Common myeloid progenitor, CD34-positive (primary cell): ENCODE measurements at regions of chr1 and their contacts with region 1.

Region 1: DNA sequence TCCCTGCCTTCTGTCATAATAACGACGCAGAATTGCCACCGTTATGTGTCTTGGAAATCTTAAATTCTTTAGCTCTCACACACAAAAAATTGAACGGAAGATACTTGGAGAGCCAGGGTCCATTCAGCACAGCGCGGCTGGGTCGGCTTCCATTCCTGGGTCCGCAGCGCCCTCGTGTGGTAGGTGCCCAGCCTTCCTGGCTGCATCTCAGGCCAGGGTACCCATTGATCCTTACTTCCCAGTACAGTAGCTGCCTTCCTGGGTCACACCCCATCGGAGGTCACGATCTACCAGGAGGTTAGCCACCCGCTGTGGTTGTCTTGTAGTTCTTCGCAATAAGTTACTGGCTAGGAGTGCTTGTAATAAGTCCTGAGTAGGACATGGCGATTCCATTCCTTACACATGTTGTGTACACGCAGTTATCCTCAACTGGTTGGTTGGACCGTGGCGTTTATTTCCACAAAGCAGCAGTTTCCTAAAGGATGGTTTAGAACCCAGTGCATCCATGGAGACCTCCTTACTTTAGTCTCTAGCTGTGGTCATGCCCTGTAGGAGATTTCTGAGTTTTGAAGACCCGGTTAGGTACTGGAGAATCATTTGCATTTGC is 9.9 kb upstream of the MTARC1 start:
- DNase-seq: peak; percentile 67 to 79 (median 74)
- H3K4me3 ChIP-seq: no peak overlapping the region
- H3K27ac ChIP-seq: no peak overlapping the region
- H3K4me1 ChIP-seq: no peaks in the 10 kb centered on the region
- H3K27me3 ChIP-seq: no peaks in the 10 kb centered on the region

Region 2: GRCh38 chr1:220726634-220727033 is 50.2 kb before region 1 on chr1:
- CTCF ChIA-PET with region 1: no interaction called
- POLR2A ChIA-PET with region 1: no interaction called
- DNase-seq: no peak
- H3K4me3 ChIP-seq: no peak overlapping the region
- H3K27ac ChIP-seq: no peak overlapping the region
- H3K4me1 ChIP-seq: peaks cover 0 to 4% (median 0%) of the 10 kb centered on the region in 4 experiments
- H3K27me3 ChIP-seq: no peaks in the 10 kb centered on the region

Region 3: DNA sequence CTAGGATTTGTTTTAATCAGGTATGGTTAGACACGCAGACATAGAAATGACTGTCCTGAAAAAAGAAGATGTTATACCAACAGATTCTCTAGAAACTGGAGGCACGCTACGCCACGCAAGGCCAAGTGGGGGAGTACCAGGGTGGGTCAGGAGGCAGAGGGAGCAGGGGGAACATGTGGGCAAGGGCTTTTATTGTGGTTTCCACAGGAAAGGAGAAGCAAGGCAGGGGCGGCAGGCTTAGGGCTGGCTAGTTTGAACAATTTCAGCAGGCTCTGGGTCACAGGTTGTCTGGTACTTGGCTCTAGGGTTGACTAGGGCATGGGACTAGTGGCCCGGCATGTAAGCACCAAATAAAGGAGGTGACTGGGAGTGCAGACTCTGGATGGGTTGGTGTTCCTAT is 21.5 kb before region 1 on chr1:
- CTCF ChIA-PET with region 1: interaction called, 35 read pairs
- POLR2A ChIA-PET with region 1: no interaction called
- DNase-seq: peak in 2 of 3 donors; percentile 52 to 55
- H3K4me3 ChIP-seq: no peak overlapping the region
- H3K27ac ChIP-seq: no peak overlapping the region
- H3K4me1 ChIP-seq: peaks cover 0 to 25% (median 3%) of the 10 kb centered on the region in 4 experiments
- H3K27me3 ChIP-seq: peaks cover 0 to 5% (median 0%) of the 10 kb centered on the region in 5 experiments

Region 4: DNA sequence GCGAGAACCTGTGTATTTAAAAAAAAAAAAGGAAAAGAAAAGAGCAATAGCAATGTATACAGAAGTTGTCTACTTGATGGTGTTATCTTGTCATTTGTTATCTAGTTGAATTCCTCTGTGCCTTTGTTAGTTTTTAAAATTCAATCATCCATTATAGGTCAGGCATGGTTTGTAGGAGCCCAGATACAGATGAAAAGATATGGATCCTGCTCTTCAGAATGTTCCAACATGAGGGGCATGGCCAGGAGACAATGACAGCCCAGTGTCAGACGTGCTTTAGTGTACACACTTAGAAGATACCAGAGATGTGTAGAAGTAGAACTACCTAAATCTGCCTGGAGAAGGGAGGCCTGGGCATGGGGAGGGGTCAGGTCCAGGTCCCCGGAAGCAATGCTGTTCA is 12.1 kb before region 1 on chr1:
- CTCF ChIA-PET with region 1: interaction called, 10 read pairs
- POLR2A ChIA-PET with region 1: no interaction called
- DNase-seq: no peak
- H3K4me3 ChIP-seq: no peak overlapping the region
- H3K27ac ChIP-seq: no peak overlapping the region
- H3K4me1 ChIP-seq: no peaks in the 10 kb centered on the region
- H3K27me3 ChIP-seq: no peaks in the 10 kb centered on the region

Region 5: GRCh38 chr1:220787069-220787614 is 10.3 kb after region 1 on chr1:
- CTCF ChIA-PET with region 1: interaction called, 13 read pairs
- POLR2A ChIA-PET with region 1: no interaction called
- DNase-seq: no peak
- H3K4me3 ChIP-seq: peak overlapping the region; percentile 30 to 81 (median 61)
- H3K27ac ChIP-seq: no peak overlapping the region
- H3K4me1 ChIP-seq: peaks cover 4 to 21% (median 18%) of the 10 kb centered on the region in 4 experiments
- H3K27me3 ChIP-seq: no peaks in the 10 kb centered on the region